ENCODE measurements at regions of chr6 and their contacts with region 1.

Region 1: DNA sequence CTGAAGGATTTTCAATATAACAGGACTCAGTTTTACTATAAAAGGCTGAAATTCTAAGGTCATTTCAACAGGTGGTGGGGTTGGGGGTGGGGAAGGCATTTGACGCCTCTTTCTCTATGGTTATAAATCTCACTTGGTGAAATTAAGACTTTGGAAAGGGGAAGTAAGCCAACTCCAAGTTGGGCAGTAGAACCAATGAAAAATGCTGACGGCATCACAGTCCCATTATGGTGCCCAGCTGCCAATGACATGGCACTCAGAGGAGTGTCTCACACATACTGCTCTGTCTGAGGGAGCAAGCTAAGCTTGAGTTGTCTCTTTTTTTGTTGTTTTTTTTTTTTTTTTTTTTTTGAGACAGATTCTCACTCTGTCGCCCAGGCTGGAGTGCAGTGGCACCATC is 4.7 kb downstream of the SLC16A10 start:
- DNase-seq: no peak
- H3K4me3 ChIP-seq: no peak overlapping the region
- CTCF ChIP-seq: no peak

Region 2: GRCh38 chr6:111027219-111027618 is 64.8 kb before region 1 on chr6:
- in situ Hi-C with region 1: loop called (anchors 5 kb)
- DNase-seq: no peak
- H3K4me3 ChIP-seq: no peak overlapping the region
- CTCF ChIP-seq: no peak

Region 3: DNA sequence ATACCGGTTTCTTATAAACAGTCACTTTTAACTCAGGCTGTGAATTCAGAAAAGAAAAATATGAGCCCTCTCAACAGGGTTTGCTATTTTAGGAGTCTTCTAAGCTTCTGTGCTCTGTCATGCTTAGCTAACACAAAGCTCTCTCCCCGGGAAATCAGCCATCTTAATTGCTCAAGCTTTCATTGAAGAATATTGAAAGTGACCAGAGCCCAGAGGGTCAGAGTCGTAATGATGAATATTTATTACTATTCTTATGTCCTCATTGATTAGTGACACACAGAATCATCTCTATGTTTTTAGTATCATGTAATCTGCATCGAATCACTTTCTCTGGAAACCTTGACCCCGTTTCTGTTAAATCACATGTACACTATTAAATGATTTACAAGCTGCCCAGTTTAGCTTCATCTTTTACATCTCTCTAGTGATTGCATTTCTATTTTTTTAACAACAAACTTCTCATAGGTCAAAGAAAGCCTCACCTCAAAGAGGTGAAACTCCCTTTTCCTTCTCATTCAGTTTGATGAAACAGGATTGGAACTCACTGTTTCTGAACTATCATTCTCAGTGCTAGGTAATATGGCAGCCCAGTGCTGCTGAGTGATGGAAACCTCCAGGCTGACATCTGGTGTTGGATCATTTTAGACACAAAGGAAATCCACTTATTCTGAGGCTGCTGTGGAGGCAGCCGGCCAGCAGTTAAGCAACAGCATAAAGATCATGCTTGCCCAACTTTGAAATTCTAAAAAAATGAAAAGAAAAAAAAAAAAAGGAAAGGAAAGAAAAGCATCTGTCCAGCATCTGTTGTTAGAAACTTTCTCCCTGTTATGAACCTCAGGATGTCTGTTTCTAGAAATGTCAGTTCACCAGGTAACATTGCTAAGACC is 1351.4 kb after region 1 on chr6:
- in situ Hi-C with region 1: no loop called
- DNase-seq: peak; percentile 55
- H3K4me3 ChIP-seq: no peak overlapping the region
- CTCF ChIP-seq: no peak